CD8-positive, alpha-beta memory T cell (primary cell): ENCODE measurements at regions of chr6 and their contacts with region 1.

Region 1: GRCh38 chr6:37516076-37516919 is 16.6 kb upstream of the CCDC167 start:
- DNase-seq: peak; percentile 88 to 97 (median 93)
- H3K4me3 ChIP-seq: peak overlapping the region; percentile 79
- H3K4me3 Mint-ChIP-seq: peak overlapping the region; percentile 77 to 96 (median 90)
- H3K27ac ChIP-seq: peak overlapping the region; percentile 98
- H3K27ac Mint-ChIP-seq: peak overlapping the region; percentile 93 to 100 (median 100)
- H3K4me1 ChIP-seq: peaks cover 90% of the 10 kb centered on the region
- H3K4me1 Mint-ChIP-seq: peaks cover 87 to 91% (median 91%) of the 10 kb centered on the region in 3 donors
- H3K27me3 ChIP-seq: no peaks in the 10 kb centered on the region
- H3K27me3 Mint-ChIP-seq: peaks cover 0 to 5% of the 10 kb centered on the region in 2 donors

Region 2: DNA sequence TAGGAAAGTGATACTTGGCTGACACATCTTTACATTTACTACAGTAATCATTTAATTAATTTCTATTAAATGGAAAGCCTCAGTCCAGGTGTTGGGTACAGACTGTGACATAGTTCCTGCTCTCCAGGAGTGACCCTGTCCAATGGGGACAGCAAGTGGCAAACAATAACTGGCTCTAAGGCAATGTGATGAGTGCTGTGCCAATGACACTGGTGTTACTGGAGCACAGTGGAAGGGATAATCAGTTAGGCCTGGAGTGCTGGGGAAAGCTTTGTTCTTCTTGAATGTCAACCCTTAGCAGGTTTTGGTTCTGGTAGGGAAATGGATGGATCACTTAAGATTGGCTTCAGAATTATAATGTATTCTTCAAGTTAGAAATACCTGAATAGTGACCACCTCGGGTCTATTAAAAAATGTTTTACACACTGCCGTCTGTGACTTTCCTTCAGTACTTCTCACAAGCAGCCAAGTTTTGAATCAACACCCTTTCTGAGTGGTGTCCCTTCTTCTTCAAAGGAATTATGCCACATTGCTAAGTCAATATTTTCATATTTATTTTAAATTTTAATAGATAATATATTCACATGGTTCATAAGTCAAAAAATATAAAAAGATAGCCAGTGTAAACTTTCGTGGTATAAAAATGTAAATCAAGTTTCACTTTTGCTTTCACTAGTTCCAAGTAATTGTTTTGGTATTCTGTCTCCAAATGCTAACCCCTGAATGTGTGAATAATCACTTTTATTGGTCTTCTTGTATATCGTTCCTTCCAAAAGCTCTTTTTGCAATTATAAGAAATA is 73.7 kb before region 1 on chr6:
- CTCF ChIA-PET with region 1: no interaction called
- POLR2A ChIA-PET with region 1: no interaction called
- DNase-seq: no peak
- H3K4me3 ChIP-seq: peak overlapping the region; percentile 46
- H3K4me3 Mint-ChIP-seq: peak overlapping the region; percentile 83 to 90 (median 87)
- H3K27ac ChIP-seq: peak overlapping the region; percentile 52
- H3K27ac Mint-ChIP-seq: peak overlapping the region; percentile 83 to 97 (median 96)
- H3K4me1 ChIP-seq: peaks cover 14% of the 10 kb centered on the region
- H3K4me1 Mint-ChIP-seq: peaks cover 30 to 58% (median 50%) of the 10 kb centered on the region in 3 donors
- H3K27me3 ChIP-seq: no peaks in the 10 kb centered on the region
- H3K27me3 Mint-ChIP-seq: no peaks in the 10 kb centered on the region

Region 3: DNA sequence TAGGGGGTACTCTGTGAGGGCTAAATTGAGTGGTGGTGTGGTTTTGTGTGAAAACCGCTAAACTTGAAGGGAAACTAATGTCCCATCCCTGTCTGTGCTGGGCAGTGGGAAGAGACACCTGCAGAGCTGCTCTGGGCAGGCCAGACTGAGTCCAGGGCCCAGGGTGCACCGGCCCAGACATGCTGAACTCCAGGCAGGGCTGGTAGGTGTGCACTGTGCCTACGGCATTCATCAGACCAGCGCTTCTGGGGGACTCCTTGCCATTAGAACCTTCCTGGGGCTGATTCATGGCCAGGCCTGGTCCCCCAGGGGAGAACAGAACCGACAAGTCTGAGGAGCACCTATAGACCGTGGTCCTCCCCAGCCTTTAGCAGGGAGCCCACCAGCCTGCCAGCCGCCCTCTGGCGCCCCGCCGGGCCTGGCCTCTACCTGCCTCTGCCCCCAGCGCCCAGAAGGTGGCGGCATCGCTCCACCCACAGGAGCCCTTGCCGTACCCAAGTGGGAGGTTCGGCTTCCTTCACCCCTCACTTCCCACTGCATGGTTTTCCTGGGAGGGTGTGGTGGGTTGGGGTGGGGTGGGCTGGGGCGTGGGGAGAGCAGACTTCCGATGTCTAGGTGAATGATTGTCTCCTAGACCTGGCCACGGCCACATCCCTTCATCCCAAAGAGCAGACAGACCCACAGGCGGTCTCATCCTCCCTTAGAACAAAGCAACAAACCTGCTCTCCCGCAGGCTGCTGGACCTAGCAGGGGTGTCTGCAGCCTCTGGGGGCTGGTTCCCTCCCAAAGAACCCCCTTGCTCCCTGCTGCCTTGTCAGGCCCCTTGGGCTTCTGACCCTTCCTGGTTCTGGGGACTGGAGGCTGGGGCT is 32.1 kb before region 1 on chr6:
- CTCF ChIA-PET with region 1: interaction called, 16 read pairs
- POLR2A ChIA-PET with region 1: interaction called, 3 read pairs
- DNase-seq: peak; percentile 71 to 85 (median 72)
- H3K4me3 ChIP-seq: no peak overlapping the region
- H3K4me3 Mint-ChIP-seq: no peak overlapping the region
- H3K27ac ChIP-seq: peak overlapping the region; percentile 24
- H3K27ac Mint-ChIP-seq: peak overlapping the region in 7 of 8 donors; percentile 7 to 88 (median 47)
- H3K4me1 ChIP-seq: peaks cover 14% of the 10 kb centered on the region
- H3K4me1 Mint-ChIP-seq: peaks cover 24 to 40% (median 24%) of the 10 kb centered on the region in 3 donors
- H3K27me3 ChIP-seq: no peaks in the 10 kb centered on the region
- H3K27me3 Mint-ChIP-seq: no peaks in the 10 kb centered on the region

Region 4: DNA sequence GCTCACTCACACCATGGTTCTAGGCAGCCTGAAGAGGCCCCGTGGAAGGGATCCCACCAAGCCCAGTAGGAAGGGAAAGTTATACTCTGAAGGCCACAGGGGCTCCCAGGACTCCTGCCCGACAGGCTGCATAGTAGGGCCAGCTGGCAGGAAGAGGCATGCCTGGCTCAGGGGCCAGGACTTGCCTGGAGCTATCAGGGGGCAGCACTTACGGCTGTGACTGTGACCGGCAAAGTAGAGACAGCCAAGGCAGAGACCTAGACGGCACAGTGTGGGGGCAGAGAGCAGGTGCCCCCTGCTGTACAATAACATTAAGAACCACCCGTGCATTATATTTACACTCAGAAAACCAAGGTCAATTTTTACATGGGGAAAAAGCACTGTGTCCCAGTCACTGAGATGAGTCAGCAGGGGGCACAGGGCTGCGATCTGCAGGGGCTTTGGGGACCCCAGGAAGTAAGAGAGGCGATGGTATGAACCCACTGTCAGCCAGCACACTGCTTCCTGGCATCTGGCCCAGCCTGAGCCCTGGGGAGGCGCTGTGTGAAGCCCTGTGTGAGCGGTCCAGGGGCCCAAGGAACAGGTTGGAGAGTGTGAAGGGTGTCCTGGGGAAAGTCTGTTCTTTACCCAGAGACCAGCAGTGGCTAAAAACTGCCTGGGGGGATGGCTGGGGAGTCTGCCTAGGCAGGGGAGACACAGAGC is 26.5 kb before region 1 on chr6:
- CTCF ChIA-PET with region 1: interaction called, 22 read pairs
- POLR2A ChIA-PET with region 1: interaction called, 14 read pairs
- DNase-seq: peak in 4 of 5 donors; percentile 18 to 71 (median 46)
- H3K4me3 ChIP-seq: no peak overlapping the region
- H3K4me3 Mint-ChIP-seq: peak overlapping the region; percentile 11 to 86 (median 65)
- H3K27ac ChIP-seq: peak overlapping the region; percentile 52
- H3K27ac Mint-ChIP-seq: peak overlapping the region; percentile 92 to 99 (median 96)
- H3K4me1 ChIP-seq: peaks cover 44% of the 10 kb centered on the region
- H3K4me1 Mint-ChIP-seq: peaks cover 72 to 87% (median 79%) of the 10 kb centered on the region in 3 donors
- H3K27me3 ChIP-seq: no peaks in the 10 kb centered on the region
- H3K27me3 Mint-ChIP-seq: no peaks in the 10 kb centered on the region

Region 5: GRCh38 chr6:37499433-37500293 is 16.6 kb before region 1 on chr6 and contains the start of gene CCDC167:
- CTCF ChIA-PET with region 1: interaction called, 65 read pairs
- POLR2A ChIA-PET with region 1: interaction called, 58 read pairs
- DNase-seq: peak; percentile 93 to 98 (median 95)
- H3K4me3 ChIP-seq: peak within 1 kb of the TSS; percentile 89
- H3K4me3 Mint-ChIP-seq: peak within 1 kb of the TSS; percentile 93 to 100 (median 97)
- H3K27ac ChIP-seq: peak within 1 kb of the TSS; percentile 93
- H3K27ac Mint-ChIP-seq: peak within 1 kb of the TSS; percentile 97 to 100 (median 100)
- H3K4me1 ChIP-seq: peaks cover 71% of the 10 kb centered on the region
- H3K4me1 Mint-ChIP-seq: peaks cover 72 to 99% (median 94%) of the 10 kb centered on the region in 3 donors
- H3K27me3 ChIP-seq: no peaks in the 10 kb centered on the region
- H3K27me3 Mint-ChIP-seq: no peaks in the 10 kb centered on the region
- total RNA-seq, gene CCDC167: 79.5 to 86.3 TPM

Region 6: GRCh38 chr6:37547564-37548061 is 31.3 kb after region 1 on chr6:
- CTCF ChIA-PET with region 1: interaction called, 11 read pairs
- POLR2A ChIA-PET with region 1: interaction called, 7 read pairs
- DNase-seq: peak in 1 of 5 donors; percentile 54
- H3K4me3 ChIP-seq: no peak overlapping the region
- H3K4me3 Mint-ChIP-seq: peak overlapping the region in 6 of 7 donors; percentile 34 to 88 (median 72)
- H3K27ac ChIP-seq: no peak overlapping the region
- H3K27ac Mint-ChIP-seq: peak overlapping the region; percentile 86 to 98 (median 94)
- H3K4me1 ChIP-seq: peaks cover 24% of the 10 kb centered on the region
- H3K4me1 Mint-ChIP-seq: peaks cover 19 to 46% (median 44%) of the 10 kb centered on the region in 3 donors
- H3K27me3 ChIP-seq: no peaks in the 10 kb centered on the region
- H3K27me3 Mint-ChIP-seq: peaks cover 0 to 4% of the 10 kb centered on the region in 2 donors